G401 (cell line): ENCODE measurements at regions of chr17 and their contacts with region 1.

Region 1: GRCh38 chr17:1882836-1883235 is 53.0 kb downstream of the RPA1 start:
- DNase-seq: peak; percentile 68

Region 2: DNA sequence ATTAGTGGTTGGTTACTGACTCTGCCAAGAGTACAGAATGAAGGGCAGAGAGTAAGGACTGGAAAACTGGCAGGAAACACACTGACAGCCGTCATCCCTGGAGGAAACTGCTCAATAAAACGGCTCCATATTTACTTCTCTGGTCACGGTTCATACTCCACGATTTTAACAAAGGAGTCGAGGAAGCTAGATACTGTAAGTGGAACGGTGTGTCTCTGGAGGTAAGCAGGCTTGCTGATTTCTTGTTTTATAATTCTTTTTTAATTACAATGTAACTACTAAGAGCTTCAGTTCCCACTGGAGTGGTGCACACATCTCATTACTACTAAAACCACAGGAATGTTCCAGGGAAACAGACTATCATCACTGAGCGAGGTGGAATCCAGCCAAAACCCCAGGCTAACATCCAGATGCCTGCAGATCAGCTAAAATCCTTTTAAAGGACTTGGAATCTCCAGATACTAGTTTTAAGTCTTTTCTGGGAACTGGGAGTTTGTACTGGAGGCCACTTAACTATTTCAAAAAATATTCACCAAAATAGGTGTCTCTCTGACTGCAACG is 103.2 kb before region 1 on chr17:
- in situ Hi-C with region 1: no loop called
- DNase-seq: no peak

Region 3: GRCh38 chr17:1820528-1821252 is 62.1 kb before region 1 on chr17:
- in situ Hi-C with region 1: no loop called
- DNase-seq: no peak

Region 4: GRCh38 chr17:1834380-1835149 is 48.3 kb before region 1 on chr17:
- in situ Hi-C with region 1: no loop called
- DNase-seq: no peak

Region 5: GRCh38 chr17:1947229-1947742 is 64.5 kb after region 1 on chr17:
- in situ Hi-C with region 1: no loop called
- DNase-seq: no peak

Region 6: DNA sequence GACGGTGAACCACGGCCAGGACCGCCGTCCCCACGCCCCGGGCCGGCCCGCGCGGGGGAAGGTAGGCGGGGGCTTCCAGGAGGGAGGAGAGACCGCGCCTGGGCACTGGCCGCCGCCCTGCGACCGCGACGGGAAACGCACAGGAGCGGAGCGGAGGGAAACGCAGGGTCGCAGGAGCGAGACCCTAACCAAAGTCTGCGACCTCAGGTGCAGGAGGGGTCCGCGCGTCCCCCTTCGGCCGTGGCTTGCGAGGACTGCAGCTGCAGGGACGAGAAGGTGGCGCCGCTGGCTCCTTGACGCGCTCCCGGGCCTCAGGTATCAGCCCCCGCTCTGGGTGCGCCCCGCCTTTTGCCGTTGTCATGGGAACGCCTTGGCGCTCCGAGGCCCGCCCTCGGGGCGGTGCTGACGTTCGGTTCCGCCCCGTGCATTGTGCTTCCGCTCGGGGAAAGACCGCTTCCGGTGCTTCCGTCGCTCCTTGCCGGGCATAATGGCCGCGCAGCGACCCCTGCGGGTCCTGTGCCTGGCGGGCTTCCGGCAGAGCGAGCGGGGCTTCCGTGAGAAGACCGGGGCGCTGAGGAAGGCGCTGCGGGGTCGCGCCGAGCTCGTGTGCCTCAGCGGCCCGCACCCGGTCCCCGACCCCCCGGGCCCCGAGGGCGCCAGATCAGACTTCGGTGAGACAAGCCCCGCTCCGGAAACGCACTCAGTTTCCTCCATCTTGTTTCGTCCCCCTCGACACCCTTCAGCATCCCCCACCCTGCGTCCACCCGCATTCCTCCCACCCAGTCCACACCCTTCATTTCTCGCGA is 158.9 kb after region 1 on chr17 and contains the start of gene OVCA2:
- in situ Hi-C with region 1: loop called (anchors 25 kb)
- DNase-seq: peak; percentile 96
- total RNA-seq, gene OVCA2: 48.0 and 63.1 TPM in 2 replicates